Tibial artery (tissue), 4 donors: ENCODE measurements at regions of chr1 and their contacts with region 1.

Region 1: DNA sequence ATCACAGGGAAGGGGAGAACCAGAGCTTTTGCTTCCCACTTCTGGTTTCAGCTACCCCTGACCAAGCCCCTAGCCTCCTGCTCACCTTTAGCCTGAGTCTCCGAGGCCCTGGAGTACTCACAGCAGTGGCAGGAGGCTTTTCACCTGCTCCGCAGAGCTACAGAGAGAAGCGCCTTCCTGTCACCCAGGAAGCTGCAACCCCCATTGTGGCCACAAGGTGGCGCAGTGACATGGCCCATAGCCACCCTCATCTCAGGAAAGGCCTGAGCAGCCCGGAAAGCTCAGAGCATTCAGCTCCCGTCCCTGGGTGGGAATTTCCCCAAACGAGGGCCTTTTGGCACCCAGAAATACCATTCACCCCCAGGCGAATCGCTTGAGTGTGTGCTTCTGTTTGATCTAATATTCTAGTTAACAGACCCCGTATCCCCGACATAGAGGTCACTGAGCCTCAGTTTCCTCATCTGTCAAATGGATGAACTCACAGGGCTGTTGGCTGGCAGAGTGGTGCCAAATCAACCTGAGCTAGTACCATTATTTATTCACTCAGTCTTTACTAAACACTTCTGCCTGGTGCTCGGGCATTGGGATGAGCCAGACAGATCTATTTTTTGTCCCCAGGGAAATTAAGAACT is 25.3 kb downstream of the A3GALT2 start:
- DNase-seq: peak; percentile 84 to 92
- H3K4me3 ChIP-seq: no peak overlapping the region
- H3K27ac ChIP-seq: peak overlapping the region; percentile 19 to 63
- H3K4me1 ChIP-seq: peaks cover 0 to 36% (median 13%) of the 10 kb centered on the region in 4 donors
- H3K27me3 ChIP-seq: no peaks in the 10 kb centered on the region
- CTCF ChIP-seq: peak; percentile 98

Region 2: DNA sequence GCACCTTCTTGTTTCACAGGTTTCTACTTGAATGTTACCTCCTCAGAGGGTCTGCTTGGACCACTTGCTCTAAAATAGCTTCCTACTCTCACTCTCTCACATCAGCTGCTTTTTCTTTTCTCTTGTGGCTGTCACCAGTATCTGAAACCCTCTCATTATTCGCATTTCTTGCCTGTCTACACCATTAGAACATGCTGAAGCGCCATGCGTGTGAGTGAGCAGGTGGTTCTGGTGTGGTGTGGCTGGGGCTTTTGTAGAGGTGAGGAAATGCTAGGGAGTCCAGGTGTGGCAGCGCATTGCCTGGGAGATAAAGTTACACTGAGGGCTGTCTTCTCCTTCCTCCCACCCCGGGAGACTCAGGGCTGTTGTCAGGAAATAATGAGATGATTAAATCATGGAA is 35.1 kb before region 1 on chr1:
- intact Hi-C with region 1: loop called (anchors 5 kb)
- DNase-seq: no peak
- H3K4me3 ChIP-seq: no peak overlapping the region
- H3K27ac ChIP-seq: peak overlapping the region; percentile 53 to 96
- H3K4me1 ChIP-seq: peaks cover 10 to 81% (median 73%) of the 10 kb centered on the region in 4 donors
- H3K27me3 ChIP-seq: no peaks in the 10 kb centered on the region
- CTCF ChIP-seq: no peak

Region 3: GRCh38 chr1:33367485-33368405 is 72.2 kb after region 1 on chr1:
- intact Hi-C with region 1: loop called (anchors 1 kb)
- DNase-seq: peak; percentile 87 to 91
- H3K4me3 ChIP-seq: no peak overlapping the region
- H3K27ac ChIP-seq: peak overlapping the region; percentile 84 to 87
- H3K4me1 ChIP-seq: peaks cover 0 to 58% (median 52%) of the 10 kb centered on the region in 4 donors
- H3K27me3 ChIP-seq: no peaks in the 10 kb centered on the region
- CTCF ChIP-seq: peak; percentile 95 to 99

Region 4: GRCh38 chr1:33466159-33466558 is 170.6 kb after region 1 on chr1:
- intact Hi-C with region 1: loop called (anchors 5 kb)
- DNase-seq: peak in 1 of 2 donors; percentile 54
- H3K4me3 ChIP-seq: no peak overlapping the region
- H3K27ac ChIP-seq: no peak overlapping the region
- H3K4me1 ChIP-seq: peaks cover 0 to 18% (median 16%) of the 10 kb centered on the region in 4 donors
- H3K27me3 ChIP-seq: no peaks in the 10 kb centered on the region
- CTCF ChIP-seq: no peak